Posterior cingulate gyrus (tissue), 11 donors: ENCODE measurements at regions of chr16 and their contacts with region 1.

Region 1: DNA sequence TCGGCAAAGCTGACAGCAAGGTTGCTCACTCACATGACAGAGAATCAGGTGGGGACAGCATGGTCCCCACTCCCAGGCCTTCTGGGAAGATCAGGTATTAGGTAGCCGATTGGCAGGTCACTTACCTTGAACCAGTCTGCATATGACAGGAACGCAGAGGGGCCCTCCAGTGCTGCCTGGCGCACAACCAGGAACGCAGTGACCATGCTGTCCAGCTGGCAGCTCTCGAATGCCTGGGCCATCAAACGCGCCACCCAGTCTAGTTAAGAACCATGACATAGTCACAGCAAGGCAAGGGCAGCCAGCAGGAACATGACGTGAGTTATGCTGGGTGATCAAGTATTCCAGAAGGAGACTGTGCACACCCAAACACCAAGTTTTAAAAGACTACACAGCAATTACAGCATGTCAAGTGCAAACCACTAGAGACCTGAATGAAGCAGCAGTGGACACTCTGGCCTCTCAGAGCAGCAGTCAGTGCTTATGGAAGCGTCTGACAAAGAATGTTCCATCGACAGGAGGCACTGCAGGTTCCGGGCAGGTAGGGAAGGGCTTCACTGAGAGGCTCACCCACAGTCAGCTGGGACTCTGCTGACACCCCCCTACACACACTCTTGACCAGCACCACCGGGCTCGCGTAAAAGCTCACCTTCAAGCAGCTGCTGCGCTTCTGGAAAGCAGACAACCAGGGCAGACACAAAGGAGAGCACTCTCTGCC is 25.0 kb downstream of the FANCA start:
- DNase-seq: peak in 1 of 10 donors; percentile 59

Region 2: GRCh38 chr16:89706507-89707263 is 84.8 kb before region 1 on chr16:
- intact Hi-C with region 1: loop called (anchors 1 kb)
- DNase-seq: no peak

Region 3: GRCh38 chr16:89749647-89750046 is 41.8 kb before region 1 on chr16:
- intact Hi-C with region 1: loop called (anchors 5 kb)
- DNase-seq: no peak

Region 4: GRCh38 chr16:89860747-89861304 is 69.4 kb after region 1 on chr16:
- intact Hi-C with region 1: loop called (anchors 1 kb)
- DNase-seq: peak in 7 of 10 donors; percentile 33 to 95 (median 63)